ENCODE measurements at regions of chr7 and their contacts with region 1.

Region 1: GRCh38 chr7:30459591-30460257 is 18.9 kb downstream of the NOD1 start:
- DNase-seq: no peak
- ATAC-seq: no peak
- H3K4me3 ChIP-seq: no peak overlapping the region
- H3K4me3 Mint-ChIP-seq: no peak overlapping the region
- H3K27ac ChIP-seq: no peak overlapping the region
- H3K27ac Mint-ChIP-seq: no peak overlapping the region
- H3K4me1 ChIP-seq: no peaks in the 10 kb centered on the region
- H3K4me1 Mint-ChIP-seq: peaks cover 6% of the 10 kb centered on the region
- H3K27me3 ChIP-seq: no peaks in the 10 kb centered on the region
- H3K27me3 Mint-ChIP-seq: no peaks in the 10 kb centered on the region
- CTCF ChIP-seq: no peak

Region 2: GRCh38 chr7:30379131-30379530 is 80.6 kb before region 1 on chr7:
- CTCF ChIA-PET with region 1: no interaction called
- POLR2A ChIA-PET with region 1: no interaction called
- intact Hi-C with region 1: loop called in 1 of 2 experiments (anchors 5 kb)
- DNase-seq: no peak
- ATAC-seq: no peak
- H3K4me3 ChIP-seq: no peak overlapping the region
- H3K4me3 Mint-ChIP-seq: no peak overlapping the region
- H3K27ac ChIP-seq: no peak overlapping the region
- H3K27ac Mint-ChIP-seq: no peak overlapping the region
- H3K4me1 ChIP-seq: no peaks in the 10 kb centered on the region
- H3K4me1 Mint-ChIP-seq: no peaks in the 10 kb centered on the region
- H3K27me3 ChIP-seq: no peaks in the 10 kb centered on the region
- H3K27me3 Mint-ChIP-seq: no peaks in the 10 kb centered on the region
- CTCF ChIP-seq: no peak

Measured in CD8-positive, alpha-beta T cell (primary cell).